Thyroid gland (tissue), 4 donors: ENCODE measurements at regions of chr6 and their contacts with region 1.

Region 1: DNA sequence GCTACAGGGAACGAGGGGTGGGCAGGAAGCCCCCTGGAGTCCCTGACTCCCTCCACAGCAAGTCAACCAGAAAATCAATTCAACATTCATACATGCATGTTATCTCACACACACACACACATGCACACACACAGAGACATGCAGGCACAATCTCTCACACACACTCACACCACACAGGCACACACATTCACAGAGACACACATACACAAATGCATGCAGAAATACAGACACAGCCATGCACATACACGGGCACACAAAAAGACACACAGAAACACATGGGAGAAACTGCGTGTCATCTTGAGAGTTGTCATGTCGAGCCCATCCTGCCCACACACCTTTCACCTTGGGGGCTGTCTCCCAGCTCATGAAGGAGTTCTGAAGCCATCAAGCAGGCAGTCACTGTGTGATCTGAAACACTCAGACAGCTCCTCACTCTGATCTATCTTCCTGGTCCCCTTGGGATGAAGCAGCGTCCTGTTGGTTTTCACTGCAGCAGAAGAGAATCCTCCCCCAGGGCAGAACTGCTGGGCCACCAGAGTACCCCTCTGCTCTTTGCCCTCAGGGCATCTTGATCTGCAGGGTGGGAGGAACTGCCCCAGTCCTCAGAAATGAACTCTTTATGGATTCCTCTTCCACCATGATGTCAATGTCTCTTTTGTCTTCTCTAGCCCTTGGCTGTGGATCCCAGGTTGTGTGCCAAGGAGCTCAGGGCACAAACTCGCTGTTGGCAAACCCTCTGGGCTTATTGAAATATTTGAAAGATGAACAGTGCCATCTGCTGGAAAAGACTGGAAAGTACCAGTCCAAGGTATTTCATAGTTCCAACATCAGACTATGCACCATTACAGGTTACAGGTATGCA is 8.8 kb downstream of the RAET1L start:
- DNase-seq: peak; percentile 73 to 75
- H3K4me3 ChIP-seq: no peak overlapping the region
- H3K27ac ChIP-seq: no peak overlapping the region
- H3K4me1 ChIP-seq: peaks cover 0 to 6% of the 10 kb centered on the region in 2 donors
- H3K27me3 ChIP-seq: peaks cover 6% of the 10 kb centered on the region
- CTCF ChIP-seq: peak in 5 of 6 experiments; percentile 40 to 84 (median 71)
- POLR2A ChIP-seq: no peak

Region 2: DNA sequence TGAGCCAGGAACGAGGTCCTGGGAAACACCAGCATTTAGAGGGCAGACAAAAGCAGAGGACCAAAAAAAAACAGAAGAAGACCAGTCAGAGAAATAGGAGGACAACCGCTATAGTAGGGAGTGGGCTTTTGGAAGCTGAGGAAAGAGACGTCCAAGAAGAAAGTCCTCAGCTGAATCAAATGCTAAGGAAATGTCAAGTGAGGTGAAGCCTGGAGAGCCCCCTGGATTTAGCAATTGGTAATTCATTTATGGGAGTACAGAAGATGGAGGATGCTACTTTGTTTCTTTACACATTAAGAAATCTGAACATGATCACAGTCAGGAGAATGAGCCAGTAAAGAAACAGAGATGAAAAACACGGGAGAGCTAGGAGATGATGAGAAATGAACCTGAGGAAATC is 193.5 kb before region 1 on chr6:
- intact Hi-C with region 1: loop called (anchors 10 kb)
- DNase-seq: no peak
- H3K4me3 ChIP-seq: no peak overlapping the region
- H3K27ac ChIP-seq: no peak overlapping the region
- H3K4me1 ChIP-seq: no peaks in the 10 kb centered on the region
- H3K27me3 ChIP-seq: no peaks in the 10 kb centered on the region
- CTCF ChIP-seq: no peak
- POLR2A ChIP-seq: no peak

Region 3: GRCh38 chr6:149881066-149881766 is 135.3 kb before region 1 on chr6:
- intact Hi-C with region 1: no loop called
- DNase-seq: no peak
- H3K4me3 ChIP-seq: no peak overlapping the region
- H3K27ac ChIP-seq: no peak overlapping the region
- H3K4me1 ChIP-seq: peaks cover 3 to 4% of the 10 kb centered on the region in 2 donors
- H3K27me3 ChIP-seq: no peaks in the 10 kb centered on the region
- CTCF ChIP-seq: no peak
- POLR2A ChIP-seq: no peak

Region 4: GRCh38 chr6:149934249-149935156 is 82.1 kb before region 1 on chr6:
- intact Hi-C with region 1: loop called (anchors 2 kb)
- DNase-seq: peak; percentile 63 to 68
- H3K4me3 ChIP-seq: no peak overlapping the region
- H3K27ac ChIP-seq: no peak overlapping the region
- H3K4me1 ChIP-seq: peaks cover 14% of the 10 kb centered on the region in 2 donors
- H3K27me3 ChIP-seq: peaks cover 17% of the 10 kb centered on the region
- CTCF ChIP-seq: peak; percentile 69 to 86 (median 80)
- POLR2A ChIP-seq: no peak